ENCODE measurements at regions of chr11 and their contacts with region 1.

Region 1: GRCh38 chr11:119624102-119624615 is 104.8 kb downstream of the NECTIN1 start:
- DNase-seq: no peak
- H3K4me3 ChIP-seq: no peak overlapping the region
- H3K27ac ChIP-seq: no peak overlapping the region
- H3K4me1 ChIP-seq: peaks cover 5 to 30% (median 17%) of the 10 kb centered on the region in 4 experiments
- H3K27me3 ChIP-seq: no peaks in the 10 kb centered on the region; a peak in 2 of 7 replicates
- CTCF ChIP-seq: peak; percentile 50 to 77 (median 56); a peak in 3 of 4 replicates
- EP300 ChIP-seq: no peak
- POLR2A ChIP-seq: no peak
- RAD21 ChIP-seq: peak in 1 of 2 experiments; percentile 52; a peak in 2 of 4 replicates

Region 2: DNA sequence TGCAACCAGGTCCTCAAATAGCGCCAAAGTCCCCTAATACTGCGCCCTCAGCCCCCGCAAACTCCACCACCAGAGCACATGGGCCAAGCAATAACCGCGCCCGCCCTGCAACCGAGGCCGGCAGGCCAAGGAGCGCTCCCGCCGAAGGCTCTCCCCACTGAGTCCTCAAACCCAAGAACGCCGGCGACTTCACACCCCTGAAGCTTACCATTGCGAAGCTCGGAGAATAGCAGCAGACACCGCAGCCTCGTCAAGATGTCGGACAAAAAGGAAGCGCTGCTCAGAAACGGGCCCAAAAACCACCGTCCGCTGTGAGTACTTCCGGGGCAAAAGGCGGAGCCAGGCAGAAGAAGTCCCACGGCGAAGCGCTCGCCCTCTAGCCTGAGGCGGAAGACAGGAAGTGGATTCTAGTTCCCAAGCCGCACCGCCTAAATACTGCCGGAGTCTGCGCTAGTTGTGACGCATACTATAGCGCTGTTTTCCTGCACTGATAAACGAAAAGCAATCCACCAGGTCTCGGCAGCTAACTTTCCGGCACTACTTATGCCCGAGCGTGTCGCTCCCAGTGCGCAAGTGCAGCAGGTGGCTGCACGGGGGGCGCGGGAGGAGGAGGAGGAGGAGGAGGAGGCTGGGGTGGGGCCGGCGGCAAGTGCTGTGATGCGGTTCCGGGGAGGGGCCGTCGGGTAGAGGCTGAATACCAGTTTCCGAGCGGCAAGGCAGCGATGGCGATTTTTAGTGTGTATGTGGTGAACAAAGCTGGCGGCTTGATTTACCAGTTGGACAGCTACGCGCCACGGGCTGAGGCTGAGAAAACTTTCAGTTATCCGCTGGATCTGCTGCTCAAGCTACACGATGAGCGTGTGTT is 605.9 kb before region 1 on chr11 and contains the starts of genes RPS25 and TRAPPC4:
- CTCF ChIA-PET with region 1: no interaction called
- POLR2A ChIA-PET with region 1: no interaction called
- DNase-seq: peak; percentile 88 to 90
- H3K4me3 ChIP-seq: peak within 1 kb of the TSS; percentile 93 to 99 (median 95)
- H3K27ac ChIP-seq: peak within 1 kb of the TSS; percentile 84
- H3K4me1 ChIP-seq: peaks cover 0 to 9% (median 2%) of the 10 kb centered on the region in 4 experiments; a peak in 4 of 7 replicates
- H3K27me3 ChIP-seq: no peaks in the 10 kb centered on the region
- CTCF ChIP-seq: no peak
- EP300 ChIP-seq: peak in 1 of 2 experiments; percentile 22; a peak in 1 of 3 replicates
- POLR2A ChIP-seq: peak; percentile 91 to 95
- RAD21 ChIP-seq: no peak
- total RNA-seq, gene RPS25: 1,525 and 1,551 TPM in 2 replicates
- total RNA-seq, gene TRAPPC4: 88.6 and 94.3 TPM in 2 replicates

Region 3: DNA sequence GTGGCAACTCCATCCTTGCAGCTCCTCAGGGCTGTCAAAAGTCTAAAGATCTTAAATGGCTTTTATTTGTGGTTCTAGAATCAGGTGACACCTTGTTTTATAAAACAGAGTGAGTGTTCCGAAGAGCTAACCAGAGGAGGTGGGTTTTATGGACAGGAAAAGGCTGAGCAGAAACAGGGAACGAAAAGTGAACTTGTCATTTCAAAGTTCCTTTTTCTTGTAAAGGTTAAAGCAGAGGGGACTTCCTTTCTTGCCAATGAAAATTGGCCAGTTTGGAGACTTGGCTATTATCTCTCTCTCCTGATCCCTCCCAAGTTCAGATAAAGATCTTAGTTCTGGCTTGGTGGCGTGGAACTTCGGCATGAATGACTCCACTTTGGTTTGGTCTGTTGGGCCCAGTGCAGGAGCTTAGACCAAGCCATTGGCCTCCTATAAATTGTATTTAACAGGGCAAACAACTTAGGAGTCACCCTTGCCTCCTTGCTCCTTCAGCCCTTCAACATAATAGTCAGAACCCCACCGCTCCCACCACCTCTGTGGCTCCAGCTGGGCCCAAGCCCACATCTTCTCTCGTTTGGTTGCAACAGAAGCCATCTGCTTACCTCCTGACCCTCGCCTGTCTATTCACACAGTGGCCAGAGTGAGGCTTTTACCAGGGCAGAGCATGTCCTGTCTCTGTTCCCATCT is 98.8 kb before region 1 on chr11:
- CTCF ChIA-PET with region 1: interaction called, 11 read pairs
- POLR2A ChIA-PET with region 1: interaction called, 3 read pairs
- DNase-seq: no peak
- H3K4me3 ChIP-seq: no peak overlapping the region
- H3K27ac ChIP-seq: no peak overlapping the region
- H3K4me1 ChIP-seq: no peaks in the 10 kb centered on the region; a peak in 1 of 7 replicates
- H3K27me3 ChIP-seq: no peaks in the 10 kb centered on the region
- CTCF ChIP-seq: no peak
- EP300 ChIP-seq: no peak
- POLR2A ChIP-seq: no peak
- RAD21 ChIP-seq: no peak

Region 4: DNA sequence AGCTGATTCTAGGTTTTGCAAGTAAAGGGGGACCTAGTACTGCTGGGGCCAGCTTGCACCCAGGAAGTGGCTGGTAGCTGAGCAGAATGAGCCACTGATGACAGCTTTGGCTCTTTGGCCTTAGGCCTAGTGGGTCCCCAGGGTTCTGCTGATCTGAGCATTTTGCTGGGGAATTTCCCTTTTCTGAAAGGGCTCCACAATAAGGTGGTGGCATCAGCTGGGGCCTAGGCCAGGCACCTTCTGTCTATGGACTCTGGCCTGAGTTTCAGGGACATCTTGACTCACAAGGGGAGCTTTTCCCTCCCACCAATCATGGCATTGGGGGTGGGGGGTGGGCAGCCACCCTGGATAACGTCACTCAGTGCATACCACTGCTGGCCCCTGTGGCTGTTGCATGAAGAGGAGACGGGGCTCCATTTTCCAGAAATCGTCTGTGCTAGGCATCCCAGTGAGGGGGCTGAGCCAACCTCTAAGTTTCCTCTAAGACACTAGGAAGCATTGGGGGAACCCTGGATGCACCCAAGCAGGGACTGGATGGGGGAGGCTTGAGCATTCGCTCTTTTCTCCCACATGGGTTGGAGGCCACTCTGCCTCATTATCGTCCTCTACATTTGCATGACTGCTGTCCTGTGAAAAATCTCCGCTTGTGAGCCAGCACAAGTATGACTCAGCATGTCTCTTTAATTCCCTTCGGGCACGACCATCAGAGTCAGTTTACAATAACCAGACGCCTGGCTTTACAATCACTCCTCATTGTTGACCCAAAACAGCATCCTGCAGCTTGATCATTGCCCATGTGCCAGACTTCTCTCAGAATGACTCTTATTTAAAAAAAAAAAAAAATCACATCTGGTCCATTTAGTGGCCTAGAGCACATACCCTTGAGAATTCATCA is 56.2 kb before region 1 on chr11:
- CTCF ChIA-PET with region 1: interaction called, 16 read pairs
- POLR2A ChIA-PET with region 1: no interaction called
- DNase-seq: no peak
- H3K4me3 ChIP-seq: no peak overlapping the region
- H3K27ac ChIP-seq: no peak overlapping the region
- H3K4me1 ChIP-seq: peaks cover 0 to 8% (median 0%) of the 10 kb centered on the region in 4 experiments; a peak in 4 of 7 replicates
- H3K27me3 ChIP-seq: no peaks in the 10 kb centered on the region; a peak in 1 of 7 replicates
- CTCF ChIP-seq: no peak
- EP300 ChIP-seq: no peak
- POLR2A ChIP-seq: no peak
- RAD21 ChIP-seq: no peak

Region 5: DNA sequence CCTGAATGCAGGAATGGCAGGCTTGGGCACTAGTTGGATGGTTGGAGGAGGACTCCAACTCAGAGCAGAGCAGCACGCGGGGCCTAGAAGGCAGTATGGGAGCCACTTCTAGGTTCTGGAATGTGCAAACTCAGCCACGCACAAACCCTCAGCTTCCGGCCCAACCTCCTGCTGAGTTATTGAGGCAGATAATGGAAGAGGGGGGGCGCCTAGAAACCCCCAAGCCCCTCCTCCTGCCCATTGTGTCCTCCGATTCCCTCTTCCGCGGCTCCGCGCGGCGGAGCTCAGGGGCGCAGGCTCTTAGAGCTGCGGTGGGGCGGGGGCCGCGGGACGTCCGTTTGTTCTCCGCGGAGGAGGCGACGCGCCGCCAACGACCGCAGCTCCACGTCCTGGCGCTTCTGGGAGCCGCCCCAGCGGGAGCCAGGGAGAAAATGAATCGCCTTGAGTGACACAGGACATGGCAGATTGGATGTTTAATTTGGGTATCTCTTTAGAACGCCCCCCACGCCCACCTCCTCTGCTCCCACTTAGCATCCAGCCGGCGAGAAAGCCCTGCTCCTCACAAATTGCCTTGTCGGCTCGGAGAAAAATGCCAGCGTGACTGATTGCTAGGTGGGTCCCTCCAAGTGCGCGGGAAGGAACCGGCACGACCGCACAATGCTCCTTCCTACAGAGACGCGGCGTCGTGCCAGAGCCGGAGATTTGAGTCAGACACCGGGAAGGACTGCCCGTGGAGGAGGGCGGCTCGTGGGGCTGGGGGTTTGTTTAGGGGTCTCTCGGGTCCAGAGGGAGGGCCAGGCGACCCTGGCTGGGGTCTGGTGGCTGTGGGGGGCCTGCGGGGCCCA is 39.7 kb before region 1 on chr11:
- CTCF ChIA-PET with region 1: interaction called, 26 read pairs
- POLR2A ChIA-PET with region 1: no interaction called
- DNase-seq: peak; percentile 70 to 79
- H3K4me3 ChIP-seq: peak overlapping the region; percentile 59 to 69 (median 64)
- H3K27ac ChIP-seq: no peak overlapping the region
- H3K4me1 ChIP-seq: peaks cover 0 to 13% (median 7%) of the 10 kb centered on the region in 4 experiments; a peak in 6 of 7 replicates
- H3K27me3 ChIP-seq: peaks cover 0 to 18% (median 7%) of the 10 kb centered on the region in 4 experiments; a peak in 4 of 7 replicates
- CTCF ChIP-seq: no peak
- EP300 ChIP-seq: peak in 1 of 2 experiments; percentile 47; a peak in 1 of 3 replicates
- POLR2A ChIP-seq: peak in 1 of 2 experiments; percentile 76; a peak in 2 of 3 replicates
- RAD21 ChIP-seq: no peak

Region 6: GRCh38 chr11:119599864-119600541 is 24.2 kb before region 1 on chr11:
- CTCF ChIA-PET with region 1: interaction called, 130 read pairs
- POLR2A ChIA-PET with region 1: interaction called, 3 read pairs
- DNase-seq: no peak
- H3K4me3 ChIP-seq: no peak overlapping the region
- H3K27ac ChIP-seq: no peak overlapping the region
- H3K4me1 ChIP-seq: peaks cover 0 to 7% (median 3%) of the 10 kb centered on the region in 4 experiments; a peak in 2 of 7 replicates
- H3K27me3 ChIP-seq: peaks cover 0 to 5% (median 0%) of the 10 kb centered on the region in 4 experiments; a peak in 2 of 7 replicates
- CTCF ChIP-seq: no peak
- EP300 ChIP-seq: no peak
- POLR2A ChIP-seq: no peak
- RAD21 ChIP-seq: no peak

Region 7: GRCh38 chr11:119641983-119642745 is 18.0 kb after region 1 on chr11:
- CTCF ChIA-PET with region 1: interaction called, 245 read pairs
- POLR2A ChIA-PET with region 1: no interaction called
- DNase-seq: no peak
- H3K4me3 ChIP-seq: no peak overlapping the region
- H3K27ac ChIP-seq: no peak overlapping the region
- H3K4me1 ChIP-seq: peaks cover 0 to 4% (median 0%) of the 10 kb centered on the region in 4 experiments; a peak in 2 of 7 replicates
- H3K27me3 ChIP-seq: no peaks in the 10 kb centered on the region; a peak in 1 of 7 replicates
- CTCF ChIP-seq: peak; percentile 73 to 83 (median 75)
- EP300 ChIP-seq: no peak
- POLR2A ChIP-seq: no peak
- RAD21 ChIP-seq: peak; percentile 68 to 82

Region 8: DNA sequence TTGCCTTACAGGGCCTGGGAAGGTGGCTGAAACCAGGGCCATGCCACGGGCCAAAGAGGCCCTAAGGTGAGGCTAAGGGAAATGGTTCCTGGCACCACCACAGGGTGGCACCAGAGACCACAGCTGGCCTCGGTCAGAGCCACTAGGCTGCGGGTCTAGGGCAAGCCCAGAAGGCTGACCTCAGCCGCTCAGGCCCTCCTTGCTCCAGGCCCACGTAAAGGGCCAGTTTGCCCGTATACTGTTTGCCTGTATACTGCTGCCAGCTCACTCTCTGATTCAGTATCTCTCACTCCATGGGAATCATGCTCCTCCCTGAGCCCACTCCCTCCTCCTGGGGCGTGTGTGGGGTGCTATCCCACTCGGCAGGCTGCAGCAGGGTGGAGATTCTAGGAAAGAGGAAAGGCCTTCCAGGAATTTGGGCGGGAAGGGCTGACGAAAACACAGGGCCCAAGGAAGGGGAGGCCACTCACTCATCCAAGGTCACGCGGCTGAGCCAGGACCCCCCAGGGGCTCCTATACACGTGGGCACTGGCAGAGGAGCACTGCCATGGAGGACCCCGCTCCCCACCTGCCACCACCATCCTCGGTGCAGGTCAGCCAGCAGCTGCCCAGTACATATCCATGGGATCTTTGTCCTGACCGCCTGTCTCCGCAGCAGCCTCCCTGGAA is 42.4 kb after region 1 on chr11:
- CTCF ChIA-PET with region 1: interaction called, 11 read pairs
- POLR2A ChIA-PET with region 1: no interaction called
- DNase-seq: peak; percentile 69 to 92
- H3K4me3 ChIP-seq: no peak overlapping the region
- H3K27ac ChIP-seq: no peak overlapping the region
- H3K4me1 ChIP-seq: peaks cover 2 to 19% (median 15%) of the 10 kb centered on the region in 4 experiments; a peak in 6 of 7 replicates
- H3K27me3 ChIP-seq: no peaks in the 10 kb centered on the region
- CTCF ChIP-seq: peak; percentile 92 to 99 (median 96)
- EP300 ChIP-seq: no peak
- POLR2A ChIP-seq: no peak
- RAD21 ChIP-seq: peak; percentile 99

Region 9: DNA sequence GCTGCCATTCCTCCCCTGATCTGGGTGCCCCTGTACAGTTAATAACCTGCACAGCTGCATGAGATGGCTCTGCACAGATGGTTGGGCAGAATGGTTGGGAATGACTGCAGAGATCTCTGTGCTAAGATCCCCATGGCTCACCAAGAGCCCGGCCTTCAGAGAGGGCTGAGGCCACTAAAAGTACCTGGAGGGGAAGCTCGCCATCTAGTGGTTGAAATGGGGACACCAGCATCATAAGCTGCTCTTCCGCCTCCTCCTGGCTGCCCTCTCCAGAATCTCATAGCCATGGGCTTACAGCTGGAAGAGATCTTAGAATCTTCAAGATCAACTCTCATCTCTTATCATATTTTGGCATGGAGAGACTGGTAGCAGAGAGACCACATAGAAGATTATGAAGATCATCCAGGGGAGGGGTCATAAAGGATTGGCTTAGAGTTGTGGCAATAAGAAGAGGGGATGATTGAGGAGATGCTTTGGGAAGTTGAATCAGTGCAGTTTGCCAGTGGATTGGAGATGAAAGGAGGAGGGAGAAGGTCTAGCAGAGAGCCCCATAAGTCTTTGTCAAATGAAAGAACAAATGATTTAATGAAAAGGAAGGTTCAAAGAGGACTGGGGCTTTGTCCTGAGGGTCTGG is 679.0 kb after region 1 on chr11:
- CTCF ChIA-PET with region 1: no interaction called
- POLR2A ChIA-PET with region 1: no interaction called
- DNase-seq: peak; percentile 64 to 87
- H3K4me3 ChIP-seq: no peak overlapping the region
- H3K27ac ChIP-seq: no peak overlapping the region
- H3K4me1 ChIP-seq: peaks cover 0 to 14% (median 8%) of the 10 kb centered on the region in 4 experiments; a peak in 6 of 7 replicates
- H3K27me3 ChIP-seq: peaks cover 0 to 4% (median 0%) of the 10 kb centered on the region in 4 experiments; a peak in 2 of 7 replicates
- CTCF ChIP-seq: peak; percentile 96 to 100 (median 100)
- EP300 ChIP-seq: no peak
- POLR2A ChIP-seq: no peak
- RAD21 ChIP-seq: peak; percentile 87 to 92